ENCODE measurements at regions of chr11 and their contacts with region 1.

Region 1: GRCh38 chr11:128624269-128625175 is 37.2 kb upstream of the ETS1 start:
- DNase-seq: peak; percentile 64
- CTCF ChIP-seq: no peak

Region 2: GRCh38 chr11:127862406-127862805 is 762.1 kb before region 1 on chr11:
- in situ Hi-C with region 1: no loop called
- DNase-seq: no peak
- CTCF ChIP-seq: no peak

Region 3: DNA sequence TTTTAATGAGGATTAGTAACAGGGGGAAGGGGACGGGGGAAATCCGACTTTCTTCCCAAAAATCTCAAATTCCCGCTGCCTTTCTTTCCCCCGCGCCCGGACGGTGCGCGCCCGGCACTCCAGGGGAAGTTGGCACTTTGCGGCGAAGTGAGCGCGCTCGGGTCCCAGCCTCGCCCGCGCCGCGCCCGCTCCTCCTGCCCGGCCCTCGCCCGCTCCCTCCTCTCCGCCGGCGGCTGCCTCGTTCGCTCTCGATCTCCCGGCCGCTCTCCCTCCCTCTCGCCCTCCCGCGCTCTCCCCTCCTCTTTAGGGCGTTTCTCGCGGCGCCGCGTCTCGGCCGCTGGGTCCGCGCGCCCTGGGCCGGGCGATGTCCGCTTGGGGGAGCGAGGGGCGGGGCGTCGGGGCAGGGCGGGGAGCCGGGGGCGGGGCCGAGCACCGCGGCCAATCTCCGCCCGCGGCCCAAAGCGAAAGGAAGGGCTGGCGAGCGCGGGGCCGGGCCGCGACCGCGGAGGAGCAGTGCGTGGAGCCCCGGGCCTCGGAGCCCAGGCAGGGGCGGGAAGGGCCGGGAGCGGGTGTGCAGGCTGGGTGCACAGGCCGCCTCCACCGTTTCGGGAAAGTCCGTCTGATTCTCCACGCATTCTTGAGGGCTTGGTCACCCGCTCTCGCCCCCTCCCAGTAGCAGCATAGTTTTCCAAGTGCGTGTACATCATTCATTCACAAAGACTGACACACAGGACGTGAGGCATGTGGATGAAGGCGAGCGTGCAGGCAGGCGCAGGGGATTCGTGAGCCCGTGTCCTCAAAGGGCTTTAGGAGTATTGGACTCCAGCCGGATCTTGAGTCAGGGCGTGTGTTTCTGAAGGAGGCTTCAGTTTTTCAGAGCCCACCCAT is 102.2 kb before region 1 on chr11:
- in situ Hi-C with region 1: loop called (anchors 10 kb)
- DNase-seq: peak; percentile 96
- CTCF ChIP-seq: no peak

Region 4: DNA sequence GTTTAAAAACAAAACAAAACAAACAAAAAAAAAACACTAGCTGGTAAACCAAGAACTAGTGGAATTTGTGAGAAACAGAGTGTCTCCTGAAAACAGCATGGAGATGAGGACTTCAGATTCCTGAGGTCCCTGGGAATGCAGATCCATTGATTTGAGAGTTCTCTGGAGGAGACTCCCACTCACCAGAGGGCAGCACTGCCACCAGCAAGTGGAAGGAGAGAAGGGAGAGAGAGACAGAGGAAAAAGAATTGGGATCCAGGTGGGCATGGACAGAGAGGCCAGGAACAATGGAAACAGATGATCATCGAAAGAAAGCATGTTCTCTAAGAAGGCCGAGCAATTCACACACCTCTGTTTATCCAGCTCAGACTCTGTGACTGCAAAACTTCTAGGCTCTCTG is 68.9 kb before region 1 on chr11:
- in situ Hi-C with region 1: no loop called
- DNase-seq: no peak
- CTCF ChIP-seq: no peak

Measured in GM13976 (cell line).